HEK293T (cell line): ENCODE measurements at regions of chr3 and their contacts with region 1.

Region 1: DNA sequence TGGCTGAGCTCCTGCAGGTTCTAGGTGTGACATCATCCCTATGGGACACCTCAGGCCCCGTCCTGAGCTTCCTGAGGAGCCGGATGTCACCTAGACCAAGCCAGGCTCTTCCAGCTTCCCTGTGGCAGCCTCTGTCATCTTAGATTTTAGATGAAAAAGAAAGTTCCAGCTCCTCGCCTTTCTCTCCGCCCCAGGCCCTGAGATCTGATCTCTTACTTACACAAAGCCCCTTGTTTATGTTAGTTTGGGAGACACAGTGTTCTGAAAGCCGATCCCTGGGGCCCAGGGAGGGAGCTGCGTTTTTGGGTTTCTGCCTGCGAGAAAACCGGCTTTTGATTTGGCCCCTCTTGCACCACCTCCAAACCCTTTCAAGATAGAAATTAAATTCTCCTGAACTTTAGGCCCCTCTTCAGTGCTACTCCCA is 40.2 kb upstream of the FAM107A start:
- DNase-seq: no peak

Region 2: GRCh38 chr3:58317811-58318210 is 299.5 kb before region 1 on chr3:
- CTCF ChIA-PET with region 1: interaction called, 10 read pairs
- POLR2A ChIA-PET with region 1: no interaction called
- DNase-seq: no peak